ENCODE measurements at regions of chr5 and their contacts with region 1.

Region 1: DNA sequence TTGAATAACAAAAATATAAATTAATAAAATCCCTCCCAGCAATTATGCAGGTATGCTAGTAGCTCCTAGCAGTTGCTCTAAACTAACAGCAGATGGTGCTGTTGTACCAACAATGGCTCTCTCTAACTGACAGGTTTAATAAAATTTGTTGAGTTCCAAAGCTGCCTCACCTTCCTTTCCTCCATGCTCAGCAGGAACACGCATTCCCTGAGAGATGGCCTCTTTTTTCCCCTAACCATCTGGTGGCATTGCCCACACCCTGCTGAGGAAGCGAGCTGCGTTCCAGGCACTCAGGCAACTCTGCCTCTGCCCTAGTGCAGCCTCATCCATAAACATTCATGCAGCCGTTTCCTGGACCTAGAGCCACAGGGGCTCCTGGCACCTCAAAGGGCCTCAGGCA is 106.2 kb downstream of the KLHL3 start:
- DNase-seq: peak; percentile 40
- ATAC-seq: peak; percentile 73
- H3K4me3 Mint-ChIP-seq: no peak overlapping the region
- H3K27ac Mint-ChIP-seq: peak overlapping the region; percentile 19
- H3K4me1 Mint-ChIP-seq: no peaks in the 10 kb centered on the region
- H3K27me3 Mint-ChIP-seq: no peaks in the 10 kb centered on the region

Region 2: DNA sequence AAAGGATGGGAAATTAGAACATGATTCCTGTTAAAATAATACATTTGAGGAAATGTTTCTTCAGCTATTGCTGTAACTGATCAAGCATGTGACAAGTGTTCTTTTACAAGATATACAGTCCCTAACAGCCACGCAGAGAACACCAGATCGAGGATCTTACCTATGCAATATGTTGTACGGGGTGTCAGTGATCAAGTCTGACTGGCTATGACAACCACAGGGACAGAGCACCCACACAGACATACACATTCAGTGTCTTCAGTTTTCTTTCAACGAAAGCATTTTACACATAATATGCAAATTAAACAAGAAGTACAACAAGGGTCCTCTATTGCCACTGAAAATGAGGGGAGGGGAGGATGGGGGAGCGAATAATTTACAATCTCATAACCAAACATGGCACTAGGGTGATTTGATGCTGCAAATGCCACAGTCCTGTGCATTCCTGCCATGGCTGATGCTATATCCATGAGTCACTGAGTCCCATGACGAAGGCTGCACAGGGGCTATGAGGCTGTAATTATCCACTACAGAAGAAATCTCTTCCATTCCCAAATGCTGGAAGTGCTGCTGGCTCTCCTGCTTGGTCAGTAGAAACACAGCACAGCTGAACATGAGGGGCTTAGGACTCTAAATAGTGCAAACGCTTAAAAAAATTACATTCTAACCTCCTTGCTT is 12.0 kb before region 1 on chr5:
- CTCF ChIA-PET with region 1: interaction called, 12 read pairs
- POLR2A ChIA-PET with region 1: interaction called, 3 read pairs
- DNase-seq: no peak
- ATAC-seq: no peak
- H3K4me3 Mint-ChIP-seq: no peak overlapping the region
- H3K27ac Mint-ChIP-seq: no peak overlapping the region
- H3K4me1 Mint-ChIP-seq: peaks cover 2% of the 10 kb centered on the region
- H3K27me3 Mint-ChIP-seq: no peaks in the 10 kb centered on the region

Region 3: GRCh38 chr5:137641148-137641547 is 11.5 kb after region 1 on chr5:
- CTCF ChIA-PET with region 1: interaction called, 42 read pairs
- POLR2A ChIA-PET with region 1: no interaction called
- DNase-seq: no peak
- ATAC-seq: no peak
- H3K4me3 Mint-ChIP-seq: no peak overlapping the region
- H3K27ac Mint-ChIP-seq: no peak overlapping the region
- H3K4me1 Mint-ChIP-seq: no peaks in the 10 kb centered on the region
- H3K27me3 Mint-ChIP-seq: no peaks in the 10 kb centered on the region

Region 4: GRCh38 chr5:137665678-137666460 is 36.2 kb after region 1 on chr5:
- CTCF ChIA-PET with region 1: interaction called, 26 read pairs
- POLR2A ChIA-PET with region 1: no interaction called
- DNase-seq: peak; percentile 76
- ATAC-seq: peak; percentile 100
- H3K4me3 Mint-ChIP-seq: peak overlapping the region; percentile 10
- H3K27ac Mint-ChIP-seq: peak overlapping the region; percentile 83
- H3K4me1 Mint-ChIP-seq: peaks cover 37% of the 10 kb centered on the region
- H3K27me3 Mint-ChIP-seq: no peaks in the 10 kb centered on the region

Region 5: GRCh38 chr5:137735555-137736284 is 106.1 kb after region 1 on chr5 and contains the start of gene KLHL3:
- CTCF ChIA-PET with region 1: interaction called, 111 read pairs
- POLR2A ChIA-PET with region 1: no interaction called
- DNase-seq: peak; percentile 54
- ATAC-seq: peak; percentile 48
- H3K4me3 Mint-ChIP-seq: no peak within 1 kb of the TSS
- H3K27ac Mint-ChIP-seq: no peak within 1 kb of the TSS
- H3K4me1 Mint-ChIP-seq: peaks cover 26% of the 10 kb centered on the region
- H3K27me3 Mint-ChIP-seq: no peaks in the 10 kb centered on the region
- total RNA-seq, gene KLHL3: 13.7 to 15.2 TPM

Region 6: GRCh38 chr5:137743031-137743640 is 113.5 kb after region 1 on chr5:
- CTCF ChIA-PET with region 1: interaction called, 111 read pairs
- POLR2A ChIA-PET with region 1: no interaction called
- DNase-seq: peak; percentile 82
- ATAC-seq: peak; percentile 88
- H3K4me3 Mint-ChIP-seq: no peak overlapping the region
- H3K27ac Mint-ChIP-seq: no peak overlapping the region
- H3K4me1 Mint-ChIP-seq: peaks cover 19% of the 10 kb centered on the region
- H3K27me3 Mint-ChIP-seq: no peaks in the 10 kb centered on the region

Region 7: GRCh38 chr5:138065102-138065501 is 435.5 kb after region 1 on chr5:
- CTCF ChIA-PET with region 1: interaction called, 17 read pairs
- POLR2A ChIA-PET with region 1: no interaction called
- DNase-seq: no peak
- ATAC-seq: no peak
- H3K4me3 Mint-ChIP-seq: no peak overlapping the region
- H3K27ac Mint-ChIP-seq: no peak overlapping the region
- H3K4me1 Mint-ChIP-seq: peaks cover 4% of the 10 kb centered on the region
- H3K27me3 Mint-ChIP-seq: no peaks in the 10 kb centered on the region